ENCODE measurements at regions of chr7 and their contacts with region 1.

Region 1: GRCh38 chr7:45923290-45923689 is 2.2 kb upstream of the IGFBP3 start:
- DNase-seq: peak; percentile 78
- H3K4me3 ChIP-seq: peak overlapping the region in 1 of 2 experiments; percentile 72; a peak in 2 of 4 replicates
- H3K27ac ChIP-seq: peak overlapping the region in 1 of 2 experiments; percentile 18; a peak in 1 of 4 replicates
- H3K4me1 ChIP-seq: peaks cover 26 to 34% of the 10 kb centered on the region in 2 experiments
- H3K27me3 ChIP-seq: no peaks in the 10 kb centered on the region
- CTCF ChIP-seq: peak; percentile 100
- EP300 ChIP-seq: no peak
- RAD21 ChIP-seq: peak; percentile 98

Region 2: GRCh38 chr7:45647967-45648670 is 275.2 kb before region 1 on chr7:
- CTCF ChIA-PET with region 1: no interaction called
- POLR2A ChIA-PET with region 1: no interaction called
- DNase-seq: no peak
- H3K4me3 ChIP-seq: no peak overlapping the region
- H3K27ac ChIP-seq: no peak overlapping the region; a peak in 1 of 4 replicates
- H3K4me1 ChIP-seq: peaks cover 0 to 43% of the 10 kb centered on the region in 2 experiments; a peak in 2 of 4 replicates
- H3K27me3 ChIP-seq: no peaks in the 10 kb centered on the region
- CTCF ChIP-seq: no peak
- EP300 ChIP-seq: no peak
- RAD21 ChIP-seq: no peak

Region 3: GRCh38 chr7:45689011-45689796 is 234.1 kb before region 1 on chr7:
- CTCF ChIA-PET with region 1: no interaction called
- POLR2A ChIA-PET with region 1: no interaction called
- DNase-seq: no peak
- H3K4me3 ChIP-seq: no peak overlapping the region
- H3K27ac ChIP-seq: no peak overlapping the region
- H3K4me1 ChIP-seq: peaks cover 4 to 8% of the 10 kb centered on the region in 2 experiments; a peak in 2 of 4 replicates
- H3K27me3 ChIP-seq: no peaks in the 10 kb centered on the region
- CTCF ChIP-seq: no peak
- EP300 ChIP-seq: no peak
- RAD21 ChIP-seq: no peak

Region 4: DNA sequence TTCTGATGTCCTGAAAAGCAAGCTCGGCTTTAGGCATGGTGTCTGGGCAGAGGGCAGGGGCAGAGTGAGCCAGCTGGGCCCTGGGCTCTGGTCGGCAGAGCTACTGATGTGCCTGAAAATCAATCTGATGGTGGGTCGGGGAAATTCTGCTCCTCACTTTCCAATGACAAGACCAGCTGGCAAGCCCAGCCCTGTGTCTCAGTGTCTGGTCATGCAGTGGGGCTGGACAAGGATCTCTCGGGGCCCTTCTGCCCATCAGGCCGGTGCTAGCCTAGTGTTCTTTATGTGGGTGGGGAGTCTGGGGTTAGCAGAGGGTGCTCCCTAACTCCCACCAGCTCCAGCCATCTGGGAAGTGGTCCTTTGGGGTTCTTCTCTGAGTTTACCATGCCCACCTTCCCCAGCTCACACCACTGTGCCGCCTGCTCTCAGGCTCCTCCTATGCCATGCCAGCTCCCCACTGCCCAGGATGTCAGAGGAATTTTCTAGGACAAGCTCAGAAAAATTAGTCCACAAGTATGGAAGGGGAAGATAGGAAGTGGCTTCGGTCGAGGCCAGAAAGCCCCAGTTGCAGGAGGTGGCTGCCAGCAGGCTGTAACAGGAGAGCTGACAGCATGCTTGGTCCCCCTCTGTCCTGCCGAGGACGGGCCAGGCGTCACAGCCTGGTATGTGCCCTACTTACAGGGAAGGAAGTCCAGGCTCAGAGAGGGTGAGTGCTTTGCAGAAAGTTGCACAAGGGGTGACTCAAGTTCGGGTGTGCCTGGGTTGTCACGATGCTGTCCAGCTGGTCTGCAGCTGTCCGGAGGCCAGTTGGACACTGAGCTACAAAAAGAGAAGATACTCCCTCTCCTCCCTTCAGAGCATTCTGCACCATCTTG is 213.9 kb before region 1 on chr7:
- CTCF ChIA-PET with region 1: no interaction called
- POLR2A ChIA-PET with region 1: no interaction called
- DNase-seq: no peak
- H3K4me3 ChIP-seq: no peak overlapping the region
- H3K27ac ChIP-seq: no peak overlapping the region
- H3K4me1 ChIP-seq: no peaks in the 10 kb centered on the region
- H3K27me3 ChIP-seq: peaks cover 18% of the 10 kb centered on the region; the same call in 1 of the 2 replicates
- CTCF ChIP-seq: no peak
- EP300 ChIP-seq: no peak
- RAD21 ChIP-seq: no peak

Region 5: GRCh38 chr7:45890902-45891461 is 32.3 kb before region 1 on chr7:
- CTCF ChIA-PET with region 1: interaction called, 53 read pairs
- POLR2A ChIA-PET with region 1: no interaction called
- DNase-seq: peak; percentile 58
- H3K4me3 ChIP-seq: no peak overlapping the region
- H3K27ac ChIP-seq: no peak overlapping the region
- H3K4me1 ChIP-seq: peaks cover 0 to 8% of the 10 kb centered on the region in 2 experiments; a peak in 1 of 4 replicates
- H3K27me3 ChIP-seq: peaks cover 12% of the 10 kb centered on the region; the same call in 1 of the 2 replicates
- CTCF ChIP-seq: peak; percentile 97
- EP300 ChIP-seq: no peak
- RAD21 ChIP-seq: peak; percentile 76

Region 6: GRCh38 chr7:45962861-45963260 is 39.6 kb after region 1 on chr7:
- CTCF ChIA-PET with region 1: interaction called, 19 read pairs
- POLR2A ChIA-PET with region 1: no interaction called
- DNase-seq: no peak
- H3K4me3 ChIP-seq: no peak overlapping the region
- H3K27ac ChIP-seq: no peak overlapping the region
- H3K4me1 ChIP-seq: no peaks in the 10 kb centered on the region
- H3K27me3 ChIP-seq: no peaks in the 10 kb centered on the region
- CTCF ChIP-seq: no peak
- EP300 ChIP-seq: no peak
- RAD21 ChIP-seq: no peak

Region 7: DNA sequence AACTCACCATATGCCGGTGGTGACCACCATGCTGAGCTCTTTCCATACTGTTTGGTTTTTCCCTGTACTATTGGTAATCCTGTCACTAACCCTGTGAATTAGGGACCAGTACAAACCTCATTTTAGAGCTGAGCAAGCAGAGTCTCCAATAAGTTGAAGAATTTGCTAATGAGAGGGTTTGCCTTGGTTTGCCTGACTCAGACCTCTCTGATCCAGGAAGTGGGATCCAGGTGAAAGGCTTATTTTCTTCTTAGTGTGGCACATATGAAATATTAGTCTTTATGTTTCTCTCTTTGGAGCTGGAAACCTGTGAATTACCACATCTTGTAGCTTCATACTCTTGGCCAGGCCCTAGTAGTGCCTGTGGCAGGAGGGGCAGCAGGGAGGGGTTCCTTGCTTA is 111.9 kb after region 1 on chr7:
- CTCF ChIA-PET with region 1: interaction called, 11 read pairs
- POLR2A ChIA-PET with region 1: no interaction called
- DNase-seq: no peak
- H3K4me3 ChIP-seq: no peak overlapping the region
- H3K27ac ChIP-seq: no peak overlapping the region
- H3K4me1 ChIP-seq: peaks cover 0 to 7% of the 10 kb centered on the region in 2 experiments; a peak in 1 of 4 replicates
- H3K27me3 ChIP-seq: no peaks in the 10 kb centered on the region
- CTCF ChIP-seq: no peak
- EP300 ChIP-seq: no peak
- RAD21 ChIP-seq: no peak

Region 8: DNA sequence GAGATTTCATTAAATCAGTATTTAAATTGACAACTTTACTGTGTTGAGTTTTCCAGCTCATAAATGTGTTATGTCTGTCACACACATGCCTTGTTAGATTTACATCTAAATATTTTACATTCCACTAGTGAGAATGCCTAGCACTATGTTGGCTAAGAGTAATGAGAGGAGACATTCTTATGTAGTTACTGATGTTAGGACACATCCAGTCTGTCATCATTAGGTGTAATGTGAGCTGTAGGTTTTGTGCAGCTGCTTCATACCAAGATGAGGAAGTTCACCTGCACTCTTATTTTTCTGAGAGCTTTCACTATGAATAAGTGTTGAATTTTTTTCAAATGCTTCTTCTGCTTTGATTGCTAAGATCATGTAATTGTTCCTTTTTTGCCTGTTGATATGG is 215.8 kb after region 1 on chr7:
- CTCF ChIA-PET with region 1: interaction called, 11 read pairs
- POLR2A ChIA-PET with region 1: no interaction called
- DNase-seq: no peak
- H3K4me3 ChIP-seq: no peak overlapping the region
- H3K27ac ChIP-seq: peak overlapping the region in 1 of 2 experiments; percentile 17; a peak in 1 of 4 replicates
- H3K4me1 ChIP-seq: peaks cover 2 to 6% of the 10 kb centered on the region in 2 experiments; a peak in 2 of 4 replicates
- H3K27me3 ChIP-seq: no peaks in the 10 kb centered on the region
- CTCF ChIP-seq: no peak
- EP300 ChIP-seq: peak; percentile 49 to 91; a peak in 3 of 4 replicates
- RAD21 ChIP-seq: no peak

Region 9: DNA sequence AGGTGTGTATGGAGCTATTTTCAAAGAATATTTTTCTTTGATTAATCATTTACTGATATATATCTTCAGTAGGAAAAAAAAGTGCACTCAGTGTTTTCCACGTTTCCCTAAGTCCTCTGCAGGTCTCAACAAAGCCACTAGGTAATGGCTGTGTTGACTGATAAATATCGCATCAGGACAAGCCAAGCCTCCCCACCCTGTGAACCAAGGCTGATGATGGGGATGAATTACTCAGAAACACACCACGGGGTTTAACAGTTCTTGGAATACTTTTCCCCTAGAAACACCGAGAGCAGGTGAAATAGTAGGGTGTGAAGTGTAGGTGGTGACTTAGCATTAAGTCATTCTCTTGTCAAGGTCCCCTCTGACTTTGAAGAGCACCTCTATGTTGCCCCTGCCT is 421.2 kb after region 1 on chr7:
- CTCF ChIA-PET with region 1: interaction called, 109 read pairs
- POLR2A ChIA-PET with region 1: no interaction called
- DNase-seq: no peak
- H3K4me3 ChIP-seq: no peak overlapping the region
- H3K27ac ChIP-seq: no peak overlapping the region
- H3K4me1 ChIP-seq: peaks cover 0 to 4% of the 10 kb centered on the region in 2 experiments; a peak in 2 of 4 replicates
- H3K27me3 ChIP-seq: no peaks in the 10 kb centered on the region
- CTCF ChIP-seq: no peak
- EP300 ChIP-seq: no peak
- RAD21 ChIP-seq: no peak

Region 10: DNA sequence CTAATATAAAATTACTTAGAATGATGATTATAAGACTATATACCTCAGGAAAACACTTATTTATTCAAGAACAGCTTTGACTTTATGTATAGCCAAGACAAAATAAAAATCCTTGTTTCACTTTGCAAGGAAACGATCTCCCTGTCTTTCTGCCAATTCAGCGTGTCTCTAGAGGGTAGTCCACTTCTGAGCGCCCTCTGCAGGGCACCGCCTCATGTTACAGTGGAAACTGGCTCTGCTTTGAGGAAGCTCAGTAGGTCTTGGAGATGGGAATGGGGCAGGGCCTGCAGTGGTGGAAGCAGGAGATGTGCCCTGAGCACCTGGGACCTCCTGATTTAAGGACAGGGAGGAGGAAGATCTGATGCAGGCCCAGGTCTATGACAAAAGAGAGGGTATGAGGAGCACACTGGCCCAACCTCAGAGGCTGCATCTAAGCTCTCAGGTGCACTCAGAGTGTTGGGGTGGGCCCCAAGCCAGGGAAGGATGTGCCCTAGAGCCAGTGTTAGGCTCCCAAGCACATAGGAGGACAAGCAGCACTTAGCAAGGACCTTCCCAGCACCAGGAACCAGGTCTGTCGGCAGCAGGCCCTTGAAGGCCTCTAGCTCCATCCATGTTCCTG is 1177.6 kb after region 1 on chr7:
- CTCF ChIA-PET with region 1: interaction called, 10 read pairs
- POLR2A ChIA-PET with region 1: no interaction called
- DNase-seq: peak; percentile 44
- H3K4me3 ChIP-seq: no peak overlapping the region
- H3K27ac ChIP-seq: no peak overlapping the region
- H3K4me1 ChIP-seq: no peaks in the 10 kb centered on the region
- H3K27me3 ChIP-seq: no peaks in the 10 kb centered on the region
- CTCF ChIP-seq: peak; percentile 73
- EP300 ChIP-seq: no peak
- RAD21 ChIP-seq: peak; percentile 47

Measured in SK-N-SH (cell line).